ENCODE measurements at regions of chr3 and their contacts with region 1.

Region 1: DNA sequence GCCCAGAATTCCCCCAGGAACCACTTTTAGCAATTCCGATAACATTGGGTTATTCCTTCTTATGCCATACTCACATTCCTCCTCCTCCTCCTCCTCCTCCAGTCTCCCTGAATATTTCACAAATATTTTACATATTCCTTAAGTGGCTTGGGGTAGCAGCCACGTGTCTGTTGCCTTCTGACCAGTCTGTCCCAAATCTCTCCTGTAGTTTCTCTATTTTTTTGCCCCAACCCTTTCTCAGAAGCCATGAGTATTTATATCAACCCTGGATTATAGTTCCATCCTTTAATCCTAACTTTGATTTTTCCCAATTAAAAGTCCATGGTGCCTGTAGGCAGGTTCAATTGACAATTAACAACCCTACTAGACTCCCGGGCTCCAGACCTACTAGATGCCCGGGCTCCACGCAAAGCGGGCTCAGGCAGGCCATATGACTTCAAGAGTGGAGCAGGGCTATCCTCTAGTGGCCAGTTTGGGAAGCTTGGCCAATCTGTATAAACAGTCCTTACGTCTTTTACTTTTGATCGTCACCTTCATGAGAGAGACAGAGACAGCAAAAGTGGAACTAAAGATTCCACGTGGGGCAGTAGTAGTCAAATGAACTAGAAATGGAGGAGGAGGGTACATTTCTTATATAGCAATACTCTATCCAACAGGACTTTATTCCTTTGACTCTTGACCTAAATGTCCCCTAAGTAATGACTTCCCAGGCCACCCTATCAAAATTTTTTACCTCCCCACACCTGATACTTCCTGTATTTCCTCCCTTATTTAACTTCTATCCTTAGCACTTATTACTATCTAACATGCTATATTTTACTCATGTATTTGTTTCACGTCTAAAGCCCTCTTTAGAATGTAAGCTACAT is 69.7 kb downstream of the USF3 start:
- DNase-seq: peak; percentile 36 to 61 (median 41)
- ATAC-seq: peak; percentile 95
- H3K4me3 ChIP-seq: no peak overlapping the region
- H3K27ac ChIP-seq: no peak overlapping the region
- H3K4me1 ChIP-seq: no peaks in the 10 kb centered on the region; a peak in 1 of 5 replicates
- H3K27me3 ChIP-seq: peaks cover 5 to 32% of the 10 kb centered on the region in 2 experiments; a peak in 3 of 5 replicates
- CTCF ChIP-seq: peak; percentile 70 to 81 (median 80)
- EP300 ChIP-seq: no peak
- POLR2A ChIP-seq: no peak
- RAD21 ChIP-seq: peak; percentile 66 to 73

Region 2: GRCh38 chr3:113051302-113051711 is 575.4 kb before region 1 on chr3:
- CTCF ChIA-PET with region 1: interaction called, 3 read pairs
- POLR2A ChIA-PET with region 1: no interaction called
- in situ Hi-C with region 1: loop called (anchors 25 kb)
- intact Hi-C with region 1: loop called (anchors 10 kb)
- DNase-seq: peak; percentile 62 to 73 (median 65)
- ATAC-seq: peak; percentile 95
- H3K4me3 ChIP-seq: no peak overlapping the region
- H3K27ac ChIP-seq: no peak overlapping the region
- H3K4me1 ChIP-seq: no peaks in the 10 kb centered on the region; a peak in 2 of 5 replicates
- H3K27me3 ChIP-seq: no peaks in the 10 kb centered on the region; a peak in 1 of 5 replicates
- CTCF ChIP-seq: peak; percentile 66 to 79 (median 75)
- EP300 ChIP-seq: no peak
- POLR2A ChIP-seq: no peak
- RAD21 ChIP-seq: peak; percentile 78 to 88

Region 3: GRCh38 chr3:113648524-113648923 is 21.8 kb after region 1 on chr3:
- CTCF ChIA-PET with region 1: no interaction called
- POLR2A ChIA-PET with region 1: no interaction called
- in situ Hi-C with region 1: no loop called
- intact Hi-C with region 1: no loop called
- DNase-seq: no peak
- ATAC-seq: no peak
- H3K4me3 ChIP-seq: no peak overlapping the region
- H3K27ac ChIP-seq: no peak overlapping the region
- H3K4me1 ChIP-seq: no peaks in the 10 kb centered on the region
- H3K27me3 ChIP-seq: no peaks in the 10 kb centered on the region
- CTCF ChIP-seq: no peak
- EP300 ChIP-seq: no peak
- POLR2A ChIP-seq: no peak
- RAD21 ChIP-seq: no peak

Region 4: GRCh38 chr3:113745273-113746068 is 118.7 kb after region 1 on chr3:
- CTCF ChIA-PET with region 1: no interaction called
- POLR2A ChIA-PET with region 1: no interaction called
- in situ Hi-C with region 1: no loop called
- intact Hi-C with region 1: loop called (anchors 5 kb)
- DNase-seq: peak; percentile 47 to 85 (median 68)
- ATAC-seq: peak; percentile 78
- H3K4me3 ChIP-seq: peak overlapping the region; percentile 90
- H3K27ac ChIP-seq: peak overlapping the region; percentile 98
- H3K4me1 ChIP-seq: peaks cover 7 to 11% of the 10 kb centered on the region in 2 experiments
- H3K27me3 ChIP-seq: no peaks in the 10 kb centered on the region
- CTCF ChIP-seq: peak; percentile 60 to 77 (median 76); a peak in 5 of 6 replicates
- EP300 ChIP-seq: no peak
- POLR2A ChIP-seq: no peak
- RAD21 ChIP-seq: peak; percentile 48 to 53; a peak in 3 of 4 replicates

Region 5: DNA sequence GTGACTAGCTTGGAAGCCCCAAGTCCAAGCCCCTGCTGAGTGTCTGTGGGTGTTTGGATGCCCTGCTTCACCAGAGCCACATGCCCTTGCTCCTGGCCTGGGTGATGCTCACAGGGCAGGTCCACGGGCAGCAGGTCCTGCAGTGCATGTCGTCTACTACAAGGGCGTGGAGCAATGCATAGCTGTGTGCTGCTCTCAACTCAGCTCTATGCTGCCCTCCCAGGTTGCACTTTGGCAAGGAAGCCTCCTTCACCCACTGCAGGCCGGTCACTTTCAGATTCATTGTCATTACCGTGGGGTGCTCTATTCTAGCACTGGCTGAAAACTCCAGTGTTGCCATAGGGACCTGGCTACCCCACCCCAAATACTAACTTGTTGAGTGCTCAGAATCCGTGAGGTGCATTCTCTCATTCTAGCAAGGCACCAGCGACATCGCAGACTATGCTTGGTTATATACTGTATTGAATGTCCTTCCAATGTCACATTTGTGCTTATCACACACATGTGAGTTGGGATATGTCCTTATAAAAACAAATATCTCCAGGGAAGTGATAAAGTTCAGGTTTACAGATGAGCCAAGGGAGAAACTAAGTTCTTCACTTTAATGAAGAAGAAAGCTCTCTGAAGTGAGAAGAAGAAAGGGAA is 263.6 kb after region 1 on chr3:
- CTCF ChIA-PET with region 1: no interaction called
- POLR2A ChIA-PET with region 1: no interaction called
- in situ Hi-C with region 1: no loop called
- intact Hi-C with region 1: loop called (anchors 10 kb)
- DNase-seq: peak in 2 of 4 experiments; percentile 5 to 9
- ATAC-seq: peak; percentile 82
- H3K4me3 ChIP-seq: no peak overlapping the region
- H3K27ac ChIP-seq: no peak overlapping the region
- H3K4me1 ChIP-seq: no peaks in the 10 kb centered on the region
- H3K27me3 ChIP-seq: peaks cover 0 to 10% of the 10 kb centered on the region in 2 experiments; a peak in 4 of 5 replicates
- CTCF ChIP-seq: 0 out of 6 replicates have a peak, but pooled peaks of 1 of the 3 experiments have one; percentile 15
- EP300 ChIP-seq: no peak
- POLR2A ChIP-seq: no peak
- RAD21 ChIP-seq: no peak

Measured in K562 (cell line).